B cell (primary cell): ENCODE measurements at regions of chr6 and their contacts with region 1.

Region 1: GRCh38 chr6:52995913-52996645 is 995 bp upstream of the GSTA4 start:
- DNase-seq: peak; percentile 76
- ATAC-seq: no peak
- H3K4me3 ChIP-seq: peak overlapping the region; percentile 14 to 58 (median 47)
- H3K4me3 Mint-ChIP-seq: peak overlapping the region; percentile 98
- H3K27ac ChIP-seq: peak overlapping the region; percentile 43 to 95
- H3K27ac Mint-ChIP-seq: peak overlapping the region; percentile 100
- H3K4me1 ChIP-seq: peaks cover 8 to 14% of the 10 kb centered on the region in 2 donors
- H3K4me1 Mint-ChIP-seq: peaks cover 23% of the 10 kb centered on the region
- H3K27me3 ChIP-seq: no peaks in the 10 kb centered on the region
- H3K27me3 Mint-ChIP-seq: peaks cover 4% of the 10 kb centered on the region
- CTCF ChIP-seq: no peak

Region 2: GRCh38 chr6:52497652-52498408 is 498.2 kb before region 1 on chr6:
- CTCF ChIA-PET with region 1: no interaction called
- POLR2A ChIA-PET with region 1: no interaction called
- intact Hi-C with region 1: loop called (anchors 10 kb)
- DNase-seq: peak; percentile 89
- ATAC-seq: peak; percentile 79
- H3K4me3 ChIP-seq: peak overlapping the region in 3 of 5 experiments; percentile 3 to 19 (median 7)
- H3K4me3 Mint-ChIP-seq: peak overlapping the region; percentile 76
- H3K27ac ChIP-seq: peak overlapping the region; percentile 96 to 99
- H3K27ac Mint-ChIP-seq: peak overlapping the region; percentile 96
- H3K4me1 ChIP-seq: peaks cover 43 to 61% of the 10 kb centered on the region in 2 donors
- H3K4me1 Mint-ChIP-seq: peaks cover 66% of the 10 kb centered on the region
- H3K27me3 ChIP-seq: no peaks in the 10 kb centered on the region
- H3K27me3 Mint-ChIP-seq: no peaks in the 10 kb centered on the region
- CTCF ChIP-seq: no peak

Region 3: DNA sequence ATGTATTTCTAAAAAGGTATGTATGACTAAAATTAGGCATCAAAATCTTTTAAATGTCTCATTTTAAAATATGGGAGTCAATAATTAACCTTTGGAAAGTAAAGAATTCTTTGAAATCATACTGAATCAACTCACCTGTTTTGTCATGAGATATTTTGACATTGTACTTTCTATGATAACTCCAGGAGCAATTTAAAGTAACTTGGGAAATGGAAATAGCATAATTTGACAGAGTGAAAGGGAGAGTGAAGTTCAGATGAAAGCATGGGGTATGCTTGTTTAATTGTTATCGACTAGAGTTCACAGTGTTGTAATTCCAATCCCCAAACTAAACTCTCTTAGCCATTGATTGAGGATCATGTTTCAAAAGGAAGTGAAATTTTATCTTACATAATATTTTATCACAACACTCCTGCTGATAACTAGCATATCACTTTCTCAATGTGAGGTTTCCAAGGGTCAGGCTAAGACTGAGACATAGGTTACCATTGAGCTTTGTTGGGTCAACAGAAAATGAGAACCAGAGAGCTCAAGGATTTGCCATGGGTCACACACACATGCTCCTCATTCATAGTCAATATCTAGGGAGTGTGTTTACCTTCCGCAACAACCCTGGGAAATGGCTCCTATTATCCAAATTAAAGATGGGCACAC is 194.8 kb before region 1 on chr6:
- CTCF ChIA-PET with region 1: no interaction called
- POLR2A ChIA-PET with region 1: no interaction called
- intact Hi-C with region 1: no loop called
- DNase-seq: no peak
- ATAC-seq: no peak
- H3K4me3 ChIP-seq: no peak overlapping the region
- H3K4me3 Mint-ChIP-seq: no peak overlapping the region
- H3K27ac ChIP-seq: no peak overlapping the region
- H3K27ac Mint-ChIP-seq: no peak overlapping the region
- H3K4me1 ChIP-seq: no peaks in the 10 kb centered on the region
- H3K4me1 Mint-ChIP-seq: no peaks in the 10 kb centered on the region
- H3K27me3 ChIP-seq: peaks cover 0 to 3% (median 0%) of the 10 kb centered on the region in 4 experiments
- H3K27me3 Mint-ChIP-seq: peaks cover 37% of the 10 kb centered on the region
- CTCF ChIP-seq: no peak

Region 4: DNA sequence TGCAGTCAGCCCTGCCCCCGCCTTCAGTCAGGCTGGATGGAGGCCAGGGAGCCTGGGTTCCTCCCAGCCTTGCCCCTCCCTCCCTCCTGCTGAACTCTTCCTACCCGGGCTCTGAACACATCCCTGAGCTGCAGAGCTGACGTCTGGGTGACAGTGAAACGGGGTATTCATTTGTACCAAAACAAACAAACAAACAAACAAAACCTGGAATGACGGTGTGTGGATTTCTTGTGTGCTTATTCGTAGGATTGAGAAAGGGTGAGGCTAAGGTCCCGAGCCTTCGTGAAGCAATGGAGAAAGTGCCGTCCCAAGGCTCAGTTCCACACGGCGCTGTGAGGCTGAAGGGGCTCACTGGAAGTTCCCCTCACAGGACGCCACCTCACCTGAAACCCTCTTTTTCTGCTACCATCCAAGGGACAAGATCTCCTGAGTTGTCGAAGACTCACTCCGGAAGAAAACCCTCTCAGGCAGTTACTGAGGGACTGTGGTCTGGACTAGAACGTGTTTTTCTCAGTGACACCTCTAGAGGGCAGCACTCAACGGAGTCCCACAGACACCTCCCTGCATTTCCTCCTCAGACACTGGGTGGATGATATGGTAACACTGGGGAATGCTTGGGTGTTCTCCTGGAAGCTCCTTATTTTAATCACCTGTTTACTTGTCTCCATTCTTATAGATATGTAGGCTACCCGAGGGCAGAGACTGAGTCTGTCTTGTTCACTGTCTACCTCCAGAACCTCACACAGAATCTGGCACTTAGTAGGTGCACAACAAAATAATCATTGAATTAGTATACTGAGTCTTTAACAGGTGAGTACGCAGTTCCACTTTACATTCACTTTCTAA is 113.9 kb before region 1 on chr6:
- CTCF ChIA-PET with region 1: interaction called, 4 read pairs
- POLR2A ChIA-PET with region 1: no interaction called
- intact Hi-C with region 1: loop called (anchors 5 kb)
- DNase-seq: peak; percentile 76
- ATAC-seq: peak; percentile 96
- H3K4me3 ChIP-seq: peak overlapping the region; percentile 42 to 69 (median 60)
- H3K4me3 Mint-ChIP-seq: peak overlapping the region; percentile 88
- H3K27ac ChIP-seq: peak overlapping the region in 1 of 2 donors; percentile 61
- H3K27ac Mint-ChIP-seq: peak overlapping the region; percentile 3
- H3K4me1 ChIP-seq: peaks cover 0 to 9% of the 10 kb centered on the region in 2 donors
- H3K4me1 Mint-ChIP-seq: peaks cover 3% of the 10 kb centered on the region
- H3K27me3 ChIP-seq: peaks cover 0 to 2% (median 0%) of the 10 kb centered on the region in 4 experiments
- H3K27me3 Mint-ChIP-seq: no peaks in the 10 kb centered on the region
- CTCF ChIP-seq: peak; percentile 89

Region 5: GRCh38 chr6:53233309-53233708 is 237.2 kb after region 1 on chr6:
- CTCF ChIA-PET with region 1: no interaction called
- POLR2A ChIA-PET with region 1: no interaction called
- intact Hi-C with region 1: loop called (anchors 2 kb)
- DNase-seq: no peak
- ATAC-seq: no peak
- H3K4me3 ChIP-seq: no peak overlapping the region
- H3K4me3 Mint-ChIP-seq: no peak overlapping the region
- H3K27ac ChIP-seq: peak overlapping the region in 1 of 2 donors; percentile 1
- H3K27ac Mint-ChIP-seq: peak overlapping the region; percentile 47
- H3K4me1 ChIP-seq: peaks cover 69 to 74% of the 10 kb centered on the region in 2 donors
- H3K4me1 Mint-ChIP-seq: peaks cover 76% of the 10 kb centered on the region
- H3K27me3 ChIP-seq: no peaks in the 10 kb centered on the region
- H3K27me3 Mint-ChIP-seq: no peaks in the 10 kb centered on the region
- CTCF ChIP-seq: no peak

Region 6: GRCh38 chr6:53263917-53264316 is 267.8 kb after region 1 on chr6:
- CTCF ChIA-PET with region 1: no interaction called
- POLR2A ChIA-PET with region 1: no interaction called
- intact Hi-C with region 1: no loop called
- DNase-seq: no peak
- ATAC-seq: no peak
- H3K4me3 ChIP-seq: no peak overlapping the region
- H3K4me3 Mint-ChIP-seq: peak overlapping the region; percentile 24
- H3K27ac ChIP-seq: peak overlapping the region in 1 of 2 donors; percentile 76
- H3K27ac Mint-ChIP-seq: peak overlapping the region; percentile 91
- H3K4me1 ChIP-seq: peaks cover 31 to 41% of the 10 kb centered on the region in 2 donors
- H3K4me1 Mint-ChIP-seq: peaks cover 64% of the 10 kb centered on the region
- H3K27me3 ChIP-seq: no peaks in the 10 kb centered on the region
- H3K27me3 Mint-ChIP-seq: no peaks in the 10 kb centered on the region
- CTCF ChIP-seq: no peak

Region 7: GRCh38 chr6:53544470-53545308 is 548.6 kb after region 1 on chr6 and contains the start of gene GCLC:
- CTCF ChIA-PET with region 1: no interaction called
- POLR2A ChIA-PET with region 1: no interaction called
- intact Hi-C with region 1: loop called (anchors 2 kb)
- DNase-seq: peak; percentile 95
- ATAC-seq: peak; percentile 67
- H3K4me3 ChIP-seq: peak within 1 kb of the TSS; percentile 45 to 81 (median 69)
- H3K4me3 Mint-ChIP-seq: peak within 1 kb of the TSS; percentile 97
- H3K27ac ChIP-seq: peak within 1 kb of the TSS in 1 of 2 donors; percentile 68
- H3K27ac Mint-ChIP-seq: peak within 1 kb of the TSS; percentile 93
- H3K4me1 ChIP-seq: peaks cover 22 to 32% of the 10 kb centered on the region in 2 donors
- H3K4me1 Mint-ChIP-seq: peaks cover 52% of the 10 kb centered on the region
- H3K27me3 ChIP-seq: no peaks in the 10 kb centered on the region
- H3K27me3 Mint-ChIP-seq: no peaks in the 10 kb centered on the region
- CTCF ChIP-seq: peak; percentile 81
- total RNA-seq, gene GCLC: 25.8 and 37.8 TPM in 2 replicates

Region 8: DNA sequence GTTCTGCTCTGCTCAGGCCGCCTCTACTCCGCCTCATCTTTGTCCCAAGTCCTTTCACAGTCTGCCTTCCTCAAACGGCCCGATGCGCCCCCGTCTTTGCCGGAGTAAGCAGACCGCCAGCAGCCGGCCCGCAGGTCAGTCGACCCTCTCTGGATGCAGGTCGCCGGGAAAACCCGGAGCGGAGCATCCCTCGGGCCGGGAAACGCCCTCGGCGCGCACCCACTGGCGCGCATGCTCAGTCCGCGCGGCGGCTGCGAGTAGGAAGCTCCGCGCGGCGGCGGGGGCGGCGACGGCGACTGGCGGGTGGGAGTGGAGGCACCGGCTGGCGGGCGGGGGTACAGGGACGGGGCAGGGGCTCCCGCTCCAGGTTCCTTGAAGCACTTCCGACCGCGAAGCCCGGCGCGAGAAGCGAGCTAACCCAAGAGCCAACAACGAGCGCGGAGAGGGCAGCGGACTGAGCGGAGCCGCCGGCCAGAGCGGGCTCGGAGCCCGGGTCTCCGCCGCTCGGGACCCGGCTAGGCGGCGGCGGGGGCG is 798.7 kb after region 1 on chr6 and contains the start of gene LRRC1:
- CTCF ChIA-PET with region 1: no interaction called
- POLR2A ChIA-PET with region 1: no interaction called
- intact Hi-C with region 1: loop called (anchors 1 kb)
- DNase-seq: peak; percentile 93
- ATAC-seq: peak; percentile 79
- H3K4me3 ChIP-seq: peak within 1 kb of the TSS; percentile 76 to 91 (median 83)
- H3K4me3 Mint-ChIP-seq: peak within 1 kb of the TSS; percentile 95
- H3K27ac ChIP-seq: peak within 1 kb of the TSS; percentile 30 to 62
- H3K27ac Mint-ChIP-seq: peak within 1 kb of the TSS; percentile 93
- H3K4me1 ChIP-seq: peaks cover 17 to 25% of the 10 kb centered on the region in 2 donors
- H3K4me1 Mint-ChIP-seq: peaks cover 35% of the 10 kb centered on the region
- H3K27me3 ChIP-seq: peaks cover 0 to 3% (median 0%) of the 10 kb centered on the region in 4 experiments
- H3K27me3 Mint-ChIP-seq: peaks cover 6% of the 10 kb centered on the region
- CTCF ChIP-seq: no peak
- total RNA-seq, gene LRRC1: 8.9 and 12.1 TPM in 2 replicates